ENCODE measurements at regions of chr16 and their contacts with region 1.

Region 1: DNA sequence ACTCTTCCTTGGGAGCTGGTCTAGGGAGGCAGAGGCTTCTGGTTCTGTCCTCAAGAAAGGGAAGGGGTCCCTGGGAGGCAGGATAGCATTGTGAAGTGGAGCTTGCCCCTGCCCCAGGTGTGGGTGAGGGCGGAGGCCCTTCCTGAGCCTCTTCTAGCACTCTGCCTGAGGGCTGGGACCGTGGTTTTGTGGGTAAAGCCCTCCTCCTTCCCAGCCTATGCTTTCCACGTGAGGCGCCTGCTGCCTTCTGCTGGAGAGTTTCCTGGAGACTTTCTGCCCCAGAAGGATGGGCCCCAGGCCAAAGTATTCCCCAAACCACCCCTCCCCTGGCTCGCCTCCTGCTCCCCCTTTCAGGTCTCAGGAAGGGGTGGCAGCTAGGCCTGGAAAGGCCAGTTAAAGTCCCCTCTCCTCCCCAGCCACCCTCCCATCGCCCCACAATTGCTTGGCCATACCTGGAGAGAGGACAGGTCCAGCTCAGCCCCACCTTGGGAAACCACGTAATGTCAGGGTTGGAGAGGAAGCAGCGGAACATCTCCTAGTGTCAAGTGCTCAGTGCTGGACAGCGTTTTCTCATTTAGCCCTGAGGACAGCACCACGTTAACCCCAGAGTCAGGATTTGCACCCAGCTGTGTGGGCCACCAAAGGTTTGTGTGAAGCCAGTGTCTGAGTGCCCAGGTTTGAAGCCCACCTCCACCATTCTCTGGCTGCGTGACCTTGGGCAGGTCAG is 5.6 kb downstream of the SBK1 start:
- DNase-seq: peak in 4 of 14 experiments; percentile 42 to 61 (median 46)
- ATAC-seq: peak; percentile 49
- H3K4me3 ChIP-seq: peak overlapping the region; percentile 11
- H3K4me3 Mint-ChIP-seq: peak overlapping the region; percentile 85
- H3K27ac ChIP-seq: peak overlapping the region in 1 of 2 donors; percentile 23
- H3K27ac Mint-ChIP-seq: peak overlapping the region; percentile 78
- H3K4me1 ChIP-seq: peaks cover 89% of the 10 kb centered on the region
- H3K4me1 Mint-ChIP-seq: peaks cover 66% of the 10 kb centered on the region
- H3K27me3 ChIP-seq: no peaks in the 10 kb centered on the region
- H3K27me3 Mint-ChIP-seq: no peaks in the 10 kb centered on the region
- CTCF ChIP-seq: no peak

Region 2: DNA sequence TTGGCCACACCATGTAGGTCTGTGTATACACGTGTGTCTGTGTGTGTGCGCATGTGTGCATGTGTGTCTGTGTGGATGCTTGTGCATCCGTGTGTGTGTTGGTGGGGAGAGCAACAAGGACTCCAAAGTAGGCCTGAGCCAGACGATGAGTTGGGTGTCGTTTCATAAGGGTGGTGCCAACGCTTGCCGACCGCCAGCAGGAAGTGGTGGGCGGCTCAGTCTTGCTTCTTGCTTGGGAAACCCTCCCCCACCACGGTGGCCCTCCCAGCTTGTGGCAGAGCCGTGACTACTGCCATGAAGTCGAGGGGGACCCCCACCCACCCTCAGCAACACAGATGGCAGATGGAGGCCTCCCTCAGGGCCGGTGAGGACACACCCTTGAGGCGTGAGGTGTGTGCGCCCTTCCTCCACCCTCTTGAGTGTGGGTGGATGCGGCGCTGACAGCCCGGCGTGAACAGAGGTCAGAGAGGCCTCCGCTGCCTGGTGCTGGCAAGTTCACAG is 11.9 kb after region 1 on chr16:
- CTCF ChIA-PET with region 1: no interaction called
- POLR2A ChIA-PET with region 1: interaction called, 50 read pairs
- intact Hi-C with region 1: loop called (anchors 2 kb)
- DNase-seq: peak; percentile 65 to 97 (median 85)
- ATAC-seq: peak; percentile 92
- H3K4me3 ChIP-seq: peak overlapping the region; percentile 32
- H3K4me3 Mint-ChIP-seq: peak overlapping the region; percentile 75
- H3K27ac ChIP-seq: peak overlapping the region; percentile 86 to 89
- H3K27ac Mint-ChIP-seq: peak overlapping the region; percentile 96
- H3K4me1 ChIP-seq: peaks cover 59% of the 10 kb centered on the region
- H3K4me1 Mint-ChIP-seq: peaks cover 69% of the 10 kb centered on the region
- H3K27me3 ChIP-seq: no peaks in the 10 kb centered on the region
- H3K27me3 Mint-ChIP-seq: no peaks in the 10 kb centered on the region
- CTCF ChIP-seq: no peak

Measured in CD4-positive, alpha-beta T cell (primary cell).